Posterior cingulate gyrus (tissue), 11 donors: ENCODE measurements at regions of chr1 and their contacts with region 1.

Region 1: GRCh38 chr1:37946703-37947360 is at the start of gene INPP5B:
- DNase-seq: peak; percentile 91 to 99 (median 94)

Region 2: DNA sequence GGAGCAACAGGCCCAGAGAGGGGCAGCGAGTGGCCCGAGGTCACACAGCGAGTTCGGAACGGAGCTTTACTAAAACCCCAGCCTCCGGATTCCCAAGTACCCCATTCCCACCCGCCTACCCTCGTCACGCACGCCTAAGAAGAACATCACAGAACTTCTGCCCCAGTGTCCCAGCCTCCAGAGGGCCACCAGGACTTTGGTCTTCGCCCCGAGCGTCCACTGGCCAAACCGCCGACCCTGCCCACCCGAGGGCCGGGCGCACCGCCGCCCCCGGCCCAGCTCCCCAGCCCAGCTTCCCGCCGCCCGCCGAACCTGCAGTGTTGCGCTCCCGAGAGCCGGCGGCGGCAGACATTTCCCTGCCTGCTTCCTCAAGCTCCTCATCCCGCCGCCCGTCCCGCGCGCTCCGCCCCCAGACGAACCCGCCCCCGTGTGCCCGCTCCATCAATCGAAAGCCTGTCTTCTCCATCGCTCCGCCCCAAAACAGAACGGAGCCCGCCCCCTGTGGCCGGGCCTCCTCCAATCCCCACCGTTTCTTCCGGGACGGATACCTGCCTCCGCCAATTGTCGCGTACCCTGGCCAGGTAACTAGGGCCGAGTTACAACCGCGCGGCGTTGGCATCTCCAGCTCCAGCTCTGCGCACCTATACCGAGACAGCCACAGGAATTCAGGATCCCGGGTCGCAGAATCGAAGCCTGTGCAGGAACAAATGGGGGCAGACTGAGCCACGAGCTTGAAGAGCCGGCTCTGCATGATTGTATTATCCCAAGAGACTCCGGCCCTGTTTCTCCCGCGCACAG is 15.3 kb before region 1 on chr1:
- intact Hi-C with region 1: loop called (anchors 1 kb)
- DNase-seq: peak; percentile 89 to 99 (median 96)

Region 3: GRCh38 chr1:37978541-37978940 is 31.7 kb after region 1 on chr1:
- intact Hi-C with region 1: no loop called
- DNase-seq: no peak

Region 4: DNA sequence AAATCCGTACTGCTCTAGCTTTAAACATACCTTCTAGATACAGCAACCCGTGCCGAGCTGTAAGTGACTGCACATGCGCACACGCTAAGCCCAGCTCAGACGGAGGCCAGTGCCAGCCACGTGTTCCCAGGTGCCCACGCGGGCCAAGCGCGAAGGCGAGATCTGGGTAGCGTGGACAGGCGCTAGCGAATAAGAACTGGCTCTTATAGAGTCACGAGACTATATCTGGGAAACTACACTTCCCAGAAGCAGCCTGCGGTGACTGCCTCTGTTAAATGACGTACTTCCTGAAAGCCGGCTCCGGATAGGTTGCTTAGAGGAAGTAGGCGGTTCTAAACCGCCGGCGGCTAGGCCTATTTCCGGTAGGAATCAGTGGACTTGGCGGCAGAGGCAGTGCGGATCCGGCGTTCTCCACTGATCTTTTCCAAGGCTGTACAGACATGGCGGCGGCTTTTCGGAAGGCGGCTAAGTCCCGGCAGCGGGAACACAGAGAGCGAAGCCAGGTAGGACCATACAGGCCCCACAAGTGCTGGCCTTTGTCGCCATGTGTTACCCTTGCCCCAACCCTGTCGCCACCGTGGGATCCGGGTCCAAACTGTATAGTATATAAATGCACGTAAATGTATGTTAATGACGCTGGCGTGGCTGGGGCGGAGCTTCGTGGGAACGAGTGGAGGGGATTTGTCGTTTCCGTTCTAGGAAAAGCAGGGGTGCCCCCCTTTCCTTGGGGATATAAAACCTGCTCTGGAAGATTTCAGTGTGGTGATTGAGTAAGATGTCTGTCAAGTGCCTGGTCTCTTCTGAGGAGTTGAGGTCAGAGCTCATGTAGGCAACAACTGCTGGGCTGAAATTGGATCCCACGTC is 65.8 kb after region 1 on chr1 and contains the start of gene UTP11:
- intact Hi-C with region 1: loop called (anchors 2 kb)
- DNase-seq: peak; percentile 90 to 99 (median 95)

Region 5: DNA sequence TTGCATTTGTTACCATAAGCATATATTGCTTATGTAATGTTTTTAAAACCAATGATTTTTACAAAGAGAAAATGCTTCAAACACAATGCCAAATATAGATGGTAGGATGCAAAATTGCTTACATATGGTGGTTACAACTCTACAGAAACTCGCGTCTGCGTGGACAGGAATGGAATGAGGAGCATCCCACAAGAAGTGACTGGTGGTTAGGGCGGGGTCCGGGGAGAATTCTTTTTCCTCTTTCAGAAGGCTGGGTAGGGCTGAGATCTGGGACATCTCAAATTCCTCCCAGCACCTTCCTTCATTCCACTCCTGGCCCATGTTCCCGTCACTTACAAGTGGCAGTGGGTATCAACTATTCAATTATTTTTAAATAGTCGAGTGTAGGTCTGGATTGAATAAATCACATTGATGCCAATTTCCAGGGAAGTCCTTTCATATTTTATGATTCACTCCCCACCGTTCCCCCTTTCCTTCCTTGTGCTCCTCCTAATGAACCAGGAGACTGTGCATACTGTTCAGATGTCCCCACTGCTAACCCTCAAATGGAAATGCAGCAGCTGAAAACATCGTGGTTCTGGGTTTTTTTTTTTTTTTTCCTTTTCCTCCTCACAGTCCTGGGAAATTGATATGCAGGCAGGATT is 274.3 kb after region 1 on chr1:
- intact Hi-C with region 1: no loop called
- DNase-seq: no peak